ENCODE measurements at regions of chr1 and their contacts with region 1.

Region 1: DNA sequence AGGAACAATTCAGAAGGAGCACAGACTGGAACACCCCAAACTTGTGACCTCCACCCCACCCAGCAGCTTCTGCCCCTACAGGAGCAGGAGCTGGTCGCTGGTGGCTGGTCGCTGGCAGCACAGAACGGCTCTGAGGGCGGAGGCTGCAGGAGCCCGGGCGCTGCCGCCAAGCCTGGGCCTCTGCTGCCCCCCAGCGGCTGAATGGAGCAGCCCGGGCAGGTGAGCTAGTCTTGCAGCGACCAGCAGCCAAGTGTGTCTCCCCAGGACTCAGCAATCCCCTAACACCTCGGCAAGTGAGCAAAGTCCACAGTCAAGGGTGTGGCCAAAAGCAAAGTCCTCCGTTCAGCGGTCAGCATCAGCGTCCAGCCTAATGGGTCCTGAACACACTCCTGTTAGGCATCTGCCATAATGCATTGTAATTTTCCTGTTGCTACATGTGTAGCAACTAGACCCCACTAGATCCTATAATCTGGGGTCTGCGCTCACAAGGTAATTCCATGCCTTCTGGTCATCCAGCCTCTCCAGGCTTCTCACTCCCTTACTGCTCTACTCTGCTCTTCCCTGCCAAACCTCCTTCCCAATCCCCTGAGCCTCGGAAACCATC is 12.1 kb upstream of the GJB5 start:
- DNase-seq: peak; percentile 80
- ATAC-seq: peak; percentile 98
- H3K4me3 Mint-ChIP-seq: no peak overlapping the region
- H3K27ac Mint-ChIP-seq: no peak overlapping the region
- H3K4me1 Mint-ChIP-seq: no peaks in the 10 kb centered on the region
- H3K27me3 Mint-ChIP-seq: peaks cover 3% of the 10 kb centered on the region

Region 2: DNA sequence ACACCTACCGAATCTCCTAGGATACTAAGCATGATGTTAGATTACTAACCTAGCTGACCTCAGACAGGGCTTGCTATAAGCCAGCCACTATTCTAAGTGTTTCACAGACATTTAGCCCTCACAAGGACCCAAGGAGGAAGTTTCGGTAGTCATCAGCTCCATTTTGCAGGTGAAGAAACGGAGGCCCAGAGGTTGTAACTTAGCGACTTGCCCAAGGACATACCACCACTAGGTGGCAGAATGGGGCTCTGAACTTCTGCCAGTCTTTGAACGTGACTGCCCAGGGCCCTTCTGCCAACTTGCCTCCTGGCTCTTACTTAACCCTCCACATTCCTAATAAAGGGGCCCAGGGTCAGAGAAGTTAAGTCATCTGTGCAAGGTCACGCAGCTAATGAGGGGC is 282.6 kb before region 1 on chr1:
- CTCF ChIA-PET with region 1: interaction called, 37 read pairs
- POLR2A ChIA-PET with region 1: no interaction called
- DNase-seq: peak; percentile 66
- ATAC-seq: no peak
- H3K4me3 Mint-ChIP-seq: no peak overlapping the region
- H3K27ac Mint-ChIP-seq: no peak overlapping the region
- H3K4me1 Mint-ChIP-seq: no peaks in the 10 kb centered on the region
- H3K27me3 Mint-ChIP-seq: no peaks in the 10 kb centered on the region

Region 3: GRCh38 chr1:34753163-34753562 is 10.4 kb after region 1 on chr1:
- CTCF ChIA-PET with region 1: interaction called, 21 read pairs
- POLR2A ChIA-PET with region 1: no interaction called
- DNase-seq: no peak
- ATAC-seq: no peak
- H3K4me3 Mint-ChIP-seq: no peak overlapping the region
- H3K27ac Mint-ChIP-seq: no peak overlapping the region
- H3K4me1 Mint-ChIP-seq: no peaks in the 10 kb centered on the region
- H3K27me3 Mint-ChIP-seq: peaks cover 4% of the 10 kb centered on the region

Measured in activated CD8-positive, alpha-beta T cell treated with anti-CD3 and anti-CD28 coated beads, Interleukin-2, amount 10 ng/mL, durations not matched to agents 7 days and 5 days (primary cell).